GM10248 (cell line): ENCODE measurements at regions of chr10 and their contacts with region 1.

Region 1: DNA sequence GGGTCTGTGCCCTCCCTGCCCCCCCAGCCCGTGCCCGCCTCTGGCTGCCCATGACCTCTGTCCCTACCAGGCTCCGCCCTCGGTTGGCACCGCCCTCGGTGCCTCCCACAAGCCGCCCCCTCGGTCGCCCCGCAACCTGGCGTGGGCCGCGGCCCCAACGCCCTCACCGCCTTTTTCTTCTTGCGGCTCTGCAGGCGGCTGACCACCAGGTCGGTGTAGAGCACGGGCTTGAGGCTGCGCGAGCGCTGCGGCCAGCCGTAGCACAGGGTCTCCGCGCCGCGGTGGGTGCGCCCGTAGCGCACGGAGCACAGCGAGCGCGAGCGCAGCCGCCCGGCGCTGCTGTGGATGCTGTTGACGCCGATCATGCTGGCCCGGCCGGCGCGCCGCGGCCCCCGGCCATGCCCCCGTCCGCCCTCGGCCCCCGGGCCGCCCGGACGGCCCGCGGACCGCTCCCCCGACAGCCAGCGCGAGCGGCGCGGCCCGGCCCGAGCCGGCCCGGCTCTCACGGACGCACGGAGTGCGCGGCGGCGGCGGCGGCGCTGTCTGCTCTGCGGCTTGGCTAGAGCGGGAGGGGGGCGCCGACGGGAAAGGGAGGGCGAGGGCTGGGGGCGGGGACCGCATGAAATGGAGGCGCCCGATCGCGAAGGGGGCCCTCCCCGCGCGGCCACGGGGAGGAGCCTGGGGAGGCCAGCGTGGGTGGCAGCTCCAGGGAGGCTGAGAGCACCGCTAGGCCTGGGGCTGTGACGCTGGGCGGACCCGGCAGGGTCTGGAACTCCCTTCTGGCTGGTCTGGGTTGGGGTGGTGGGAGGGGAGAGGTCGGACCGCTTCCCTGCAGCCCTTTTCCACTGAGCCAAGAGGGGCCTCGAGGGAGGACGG is 9.6 kb downstream of the PSD start:
- DNase-seq: peak; percentile 75
- CTCF ChIP-seq: no peak

Region 2: DNA sequence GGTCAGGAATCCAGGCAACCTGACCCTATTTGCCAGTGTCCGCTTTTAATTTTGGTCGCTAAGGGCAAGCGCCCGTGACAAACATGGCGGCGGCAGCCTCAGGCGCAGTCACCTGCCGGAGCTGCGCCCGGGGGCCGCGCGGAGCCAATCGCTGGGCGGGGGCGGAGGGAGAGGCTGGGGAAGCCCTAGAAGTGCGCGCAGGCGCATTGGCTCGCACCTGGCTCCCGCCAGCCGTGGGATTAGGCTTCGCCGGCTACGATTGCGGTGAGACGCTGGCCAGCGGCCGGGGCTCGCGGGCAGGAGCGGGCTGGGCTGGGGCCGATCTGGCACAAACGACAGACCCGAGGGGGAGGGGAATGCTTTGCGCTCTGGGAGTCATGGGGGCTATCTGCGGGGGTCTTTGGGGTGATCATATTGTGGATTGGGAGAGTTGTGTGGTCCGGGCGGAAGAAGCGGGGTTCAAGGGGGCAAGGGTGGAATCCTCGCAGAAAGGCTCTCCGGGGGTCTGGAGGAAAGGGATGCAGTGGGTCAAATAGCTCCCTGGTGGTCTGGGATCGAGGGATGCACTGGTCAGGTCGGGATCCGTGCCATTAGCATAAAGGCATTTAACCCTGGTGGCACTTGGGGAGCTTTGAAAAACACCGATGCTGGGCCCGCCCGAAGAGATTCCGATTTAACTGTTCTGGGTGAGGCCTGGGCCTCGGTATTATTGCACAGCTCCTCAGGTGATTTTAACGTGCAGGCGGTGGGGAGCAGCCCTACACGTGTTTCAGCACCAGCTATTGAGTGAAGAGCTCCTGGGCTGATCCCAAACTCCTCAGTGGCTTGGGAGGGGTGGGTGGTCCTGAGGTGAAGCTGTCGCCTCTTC is 52.5 kb after region 1 on chr10:
- CTCF ChIA-PET with region 1: interaction called, 10 read pairs
- POLR2A ChIA-PET with region 1: no interaction called
- DNase-seq: peak; percentile 100
- CTCF ChIP-seq: no peak

Region 3: GRCh38 chr10:102615361-102615760 is 206.4 kb after region 1 on chr10:
- CTCF ChIA-PET with region 1: no interaction called
- POLR2A ChIA-PET with region 1: no interaction called
- DNase-seq: peak; percentile 32
- CTCF ChIP-seq: peak; percentile 16